ENCODE measurements at regions of chr11 and their contacts with region 1.

Region 1: DNA sequence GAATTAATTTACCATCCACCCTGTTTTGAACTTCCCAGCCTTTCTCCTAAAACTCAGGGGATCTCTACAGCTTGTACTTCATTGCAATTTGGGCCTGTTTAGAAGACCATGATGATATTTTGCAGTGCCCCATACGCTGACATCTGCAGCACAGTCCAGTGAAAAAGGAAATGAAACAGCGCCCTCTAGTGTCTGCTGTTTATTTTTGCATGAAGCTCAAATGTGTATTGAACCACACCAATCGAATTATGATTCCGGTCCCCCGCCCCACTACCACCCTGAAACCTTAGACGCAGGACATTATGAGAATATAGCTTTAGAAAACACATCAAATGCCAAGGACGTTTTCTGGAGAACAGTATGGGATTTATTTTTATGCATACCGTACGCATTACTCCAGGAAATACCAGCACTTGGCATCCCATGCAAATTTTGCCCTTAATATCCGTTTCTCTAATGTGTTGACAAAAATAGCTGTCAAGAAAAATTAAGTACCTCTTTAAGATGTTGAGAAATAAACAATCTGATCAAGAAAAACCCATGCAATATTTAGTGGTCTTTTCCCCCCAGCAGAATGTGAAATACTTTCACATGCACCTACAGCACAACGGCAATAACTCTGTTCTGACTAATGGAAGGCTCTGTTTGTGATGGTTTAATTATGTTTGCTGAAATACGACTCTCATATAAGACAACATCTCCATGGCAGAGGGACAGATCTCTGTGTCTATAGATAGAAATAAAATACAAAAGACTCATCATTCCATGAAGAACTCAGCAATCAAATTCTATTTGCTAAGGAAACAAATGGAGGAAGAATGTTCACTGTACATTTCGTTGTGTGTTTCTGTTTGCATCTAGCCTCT is 93.9 kb downstream of the TECTA start:
- DNase-seq: peak; percentile 79
- ATAC-seq: peak; percentile 84
- H3K4me3 Mint-ChIP-seq: no peak overlapping the region
- H3K27ac Mint-ChIP-seq: no peak overlapping the region
- H3K4me1 Mint-ChIP-seq: no peaks in the 10 kb centered on the region
- H3K27me3 Mint-ChIP-seq: peaks cover 24% of the 10 kb centered on the region

Region 2: DNA sequence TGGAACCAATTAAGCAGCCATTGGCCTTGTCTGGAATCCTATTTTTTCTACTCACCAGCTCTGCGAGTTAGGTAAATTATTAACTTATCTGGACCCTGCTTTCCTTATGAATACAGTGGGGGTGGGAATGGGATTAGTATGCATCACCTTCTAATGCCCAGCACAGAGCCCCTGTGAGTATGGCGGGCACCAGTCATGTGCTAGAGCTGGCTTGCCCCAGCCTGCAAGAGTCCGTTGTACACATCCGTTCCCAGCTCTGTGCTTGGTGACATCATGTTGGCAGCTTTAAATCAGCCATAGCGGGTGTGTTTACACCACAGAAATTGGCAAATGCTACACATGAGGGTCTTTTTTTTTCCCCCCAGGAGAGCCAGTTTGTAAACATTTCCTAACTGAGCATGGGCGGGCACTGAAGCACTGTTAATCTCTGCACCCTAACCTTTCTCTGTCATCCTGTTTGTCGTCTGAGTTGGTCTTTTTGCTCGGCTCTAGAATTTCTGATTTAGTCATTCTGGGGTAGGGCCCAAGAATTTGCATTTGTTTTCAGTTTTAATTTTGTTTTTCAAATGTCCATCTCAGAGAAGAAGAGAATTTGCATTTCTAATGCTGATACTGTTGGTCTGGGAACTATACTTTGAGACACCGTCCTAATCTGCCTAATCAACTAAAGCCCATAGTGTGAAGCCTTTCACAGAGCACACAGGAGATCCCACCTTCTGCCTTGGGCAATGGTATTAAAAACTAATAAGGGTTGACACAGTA is 301.3 kb before region 1 on chr11:
- CTCF ChIA-PET with region 1: no interaction called
- POLR2A ChIA-PET with region 1: no interaction called
- DNase-seq: no peak
- ATAC-seq: no peak
- H3K4me3 Mint-ChIP-seq: no peak overlapping the region
- H3K27ac Mint-ChIP-seq: no peak overlapping the region
- H3K4me1 Mint-ChIP-seq: no peaks in the 10 kb centered on the region
- H3K27me3 Mint-ChIP-seq: peaks cover 2% of the 10 kb centered on the region

Region 3: GRCh38 chr11:120945042-120945441 is 249.9 kb before region 1 on chr11:
- CTCF ChIA-PET with region 1: interaction called, 19 read pairs
- POLR2A ChIA-PET with region 1: no interaction called
- DNase-seq: no peak
- ATAC-seq: no peak
- H3K4me3 Mint-ChIP-seq: no peak overlapping the region
- H3K27ac Mint-ChIP-seq: no peak overlapping the region
- H3K4me1 Mint-ChIP-seq: no peaks in the 10 kb centered on the region
- H3K27me3 Mint-ChIP-seq: peaks cover 3% of the 10 kb centered on the region

Region 4: DNA sequence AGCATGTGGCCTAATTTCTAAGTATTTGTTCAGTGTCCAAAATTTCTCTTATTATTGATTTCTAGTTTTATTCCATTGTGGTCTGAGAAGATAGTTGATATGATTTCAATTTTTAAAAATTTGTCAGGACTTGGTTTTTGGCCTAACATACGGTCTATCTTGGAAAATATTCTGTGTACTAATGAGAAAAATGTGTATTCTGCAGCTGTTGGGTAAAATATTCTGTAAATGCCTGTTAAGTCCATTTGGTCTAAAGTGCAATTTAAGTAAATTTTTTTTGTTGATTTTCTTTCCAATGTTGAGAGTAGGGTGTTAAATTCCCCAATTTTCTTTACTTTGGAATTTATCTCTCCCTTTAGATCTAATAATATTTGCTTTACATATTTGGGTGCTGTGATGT is 15.7 kb before region 1 on chr11:
- CTCF ChIA-PET with region 1: interaction called, 11 read pairs
- POLR2A ChIA-PET with region 1: no interaction called
- DNase-seq: no peak
- ATAC-seq: no peak
- H3K4me3 Mint-ChIP-seq: no peak overlapping the region
- H3K27ac Mint-ChIP-seq: no peak overlapping the region
- H3K4me1 Mint-ChIP-seq: no peaks in the 10 kb centered on the region
- H3K27me3 Mint-ChIP-seq: peaks cover 2% of the 10 kb centered on the region

Measured in activated CD8-positive, alpha-beta T cell treated with anti-CD3 and anti-CD28 coated beads, Interleukin-2, amount 10 ng/mL, durations not matched to agents 7 days and 5 days (primary cell).